AG04450 (cell line): ENCODE measurements at regions of chr3 and their contacts with region 1.

Region 1: DNA sequence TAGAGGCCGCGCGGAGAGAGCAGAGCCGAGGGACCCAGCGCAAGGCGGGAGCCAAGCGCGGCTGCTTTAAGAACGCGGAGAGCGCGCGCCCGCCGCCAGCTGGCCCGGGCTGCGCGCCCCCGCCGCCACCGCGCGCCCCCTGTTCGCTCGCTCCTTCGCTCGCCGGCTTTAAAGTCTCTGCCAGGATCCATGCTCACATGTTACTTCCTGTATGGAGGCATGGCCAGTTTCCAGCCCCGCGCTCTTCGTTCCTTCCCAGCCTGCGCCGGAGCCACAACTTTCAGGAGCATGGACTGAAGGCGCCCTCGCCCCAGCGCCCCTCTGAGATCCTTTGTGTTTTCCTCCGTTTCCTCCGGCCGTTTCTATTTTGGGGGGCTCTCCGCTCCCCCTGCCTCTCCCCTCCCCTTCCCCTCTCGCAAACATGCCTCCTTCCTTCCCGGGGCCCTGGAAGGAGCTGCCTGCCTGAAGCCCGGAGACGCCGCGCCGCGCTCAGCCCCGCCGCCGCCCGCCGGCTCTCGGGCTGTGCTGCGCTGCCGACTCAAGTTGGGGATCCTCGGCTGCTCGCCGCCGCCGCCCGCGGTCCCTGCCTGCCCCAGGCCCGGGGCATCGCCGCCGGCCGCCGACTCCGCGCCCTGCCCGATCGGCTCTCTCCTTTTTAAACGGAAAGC is at the start of gene PTPRG:
- DNase-seq: peak; percentile 83
- H3K4me3 ChIP-seq: peak within 1 kb of the TSS; percentile 86
- H3K27ac ChIP-seq: peak within 1 kb of the TSS; percentile 96
- H3K27me3 ChIP-seq: no peaks in the 10 kb centered on the region
- CTCF ChIP-seq: no peak
- polyA plus RNA-seq, gene PTPRG: 24.2 and 26.5 TPM in 2 replicates

Region 2: GRCh38 chr3:61360297-61360965 is 201.1 kb before region 1 on chr3:
- CTCF ChIA-PET with region 1: no interaction called
- POLR2A ChIA-PET with region 1: no interaction called
- DNase-seq: no peak
- H3K4me3 ChIP-seq: no peak overlapping the region
- H3K27ac ChIP-seq: no peak overlapping the region
- H3K27me3 ChIP-seq: no peaks in the 10 kb centered on the region
- CTCF ChIP-seq: no peak

Region 3: DNA sequence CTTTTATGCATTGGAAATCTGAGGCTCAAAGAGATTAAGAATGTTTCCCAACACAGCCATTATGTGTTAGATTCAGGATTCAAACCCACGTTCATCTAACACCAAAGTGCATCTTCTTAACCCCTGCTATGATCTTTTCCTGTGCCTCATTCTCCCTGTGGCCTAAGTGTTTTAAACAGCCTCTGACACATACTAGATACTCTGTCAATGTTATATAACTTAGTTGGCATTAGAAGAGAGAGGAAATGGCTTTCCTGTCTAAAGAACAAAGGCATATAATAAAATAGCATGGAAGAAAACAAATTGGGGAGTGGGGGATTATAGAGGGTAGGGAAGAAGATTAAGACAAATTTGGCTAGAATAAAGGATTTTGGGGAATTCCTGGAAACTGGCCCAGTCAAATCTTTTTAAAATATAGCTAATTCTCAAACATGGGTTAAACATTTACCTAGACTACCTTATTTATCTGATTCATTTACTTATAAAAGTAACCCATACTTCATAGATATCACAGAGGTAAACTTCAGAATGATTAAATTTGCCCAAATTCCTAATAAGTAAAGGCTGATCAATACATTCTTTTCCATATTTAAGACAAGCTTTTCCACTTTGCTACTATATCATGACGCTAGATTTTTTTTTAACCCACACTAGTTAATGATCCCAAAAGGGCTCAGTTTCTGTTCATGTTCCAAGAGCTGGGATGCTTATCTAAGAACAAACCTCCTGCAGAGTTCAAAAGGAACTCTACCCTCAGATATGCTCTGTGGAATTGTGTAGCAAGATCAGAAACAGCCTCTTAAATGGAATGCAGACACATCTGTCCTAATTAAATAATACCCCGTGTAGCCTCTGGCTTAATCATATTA is 123.0 kb before region 1 on chr3:
- CTCF ChIA-PET with region 1: no interaction called
- POLR2A ChIA-PET with region 1: no interaction called
- DNase-seq: no peak
- H3K4me3 ChIP-seq: no peak overlapping the region
- H3K27ac ChIP-seq: no peak overlapping the region
- H3K27me3 ChIP-seq: no peaks in the 10 kb centered on the region
- CTCF ChIP-seq: no peak

Region 4: DNA sequence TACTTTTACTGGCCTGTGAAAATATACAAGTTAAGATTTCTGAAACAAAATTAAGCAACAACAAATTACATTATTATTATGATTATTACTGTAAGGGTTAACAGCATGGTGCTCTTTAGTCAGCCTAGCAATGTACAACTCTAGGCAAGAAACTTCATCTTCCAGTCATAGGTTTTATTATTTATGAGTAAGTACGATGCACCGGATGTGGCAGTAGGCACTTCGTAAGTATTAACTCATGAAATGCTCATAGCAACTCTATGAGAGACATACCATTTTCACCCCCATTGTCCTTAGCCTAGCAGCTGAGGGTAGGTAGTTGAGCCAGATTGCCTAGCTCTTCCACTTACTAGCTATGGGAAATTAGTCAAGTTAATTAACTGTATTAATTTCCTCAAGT is 68.2 kb before region 1 on chr3:
- CTCF ChIA-PET with region 1: no interaction called
- POLR2A ChIA-PET with region 1: no interaction called
- DNase-seq: no peak
- H3K4me3 ChIP-seq: no peak overlapping the region
- H3K27ac ChIP-seq: no peak overlapping the region
- H3K27me3 ChIP-seq: no peaks in the 10 kb centered on the region
- CTCF ChIP-seq: no peak

Region 5: DNA sequence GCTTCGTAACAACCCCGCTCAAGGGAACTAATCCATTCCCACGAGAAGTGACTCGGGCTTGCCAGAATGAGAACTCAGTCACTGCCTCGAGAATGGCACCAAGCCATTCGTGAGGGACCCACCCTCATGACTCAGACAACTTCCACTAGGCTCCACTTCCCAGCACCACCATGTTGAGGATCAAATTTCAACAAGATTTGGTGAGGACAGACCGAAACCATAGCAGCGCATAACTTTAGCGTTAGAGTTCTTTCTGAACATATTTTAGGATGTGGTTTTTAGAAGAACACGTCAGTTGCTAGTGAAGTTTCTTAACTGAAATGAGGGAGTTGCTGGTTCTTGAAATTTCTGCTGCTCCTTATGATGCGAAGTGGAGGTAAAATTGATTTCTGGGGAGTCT is 13.3 kb after region 1 on chr3:
- CTCF ChIA-PET with region 1: interaction called, 13 read pairs
- POLR2A ChIA-PET with region 1: interaction called, 3 read pairs
- DNase-seq: peak; percentile 91
- H3K4me3 ChIP-seq: peak overlapping the region; percentile 38
- H3K27ac ChIP-seq: peak overlapping the region; percentile 92
- H3K27me3 ChIP-seq: no peaks in the 10 kb centered on the region
- CTCF ChIP-seq: no peak

Region 6: DNA sequence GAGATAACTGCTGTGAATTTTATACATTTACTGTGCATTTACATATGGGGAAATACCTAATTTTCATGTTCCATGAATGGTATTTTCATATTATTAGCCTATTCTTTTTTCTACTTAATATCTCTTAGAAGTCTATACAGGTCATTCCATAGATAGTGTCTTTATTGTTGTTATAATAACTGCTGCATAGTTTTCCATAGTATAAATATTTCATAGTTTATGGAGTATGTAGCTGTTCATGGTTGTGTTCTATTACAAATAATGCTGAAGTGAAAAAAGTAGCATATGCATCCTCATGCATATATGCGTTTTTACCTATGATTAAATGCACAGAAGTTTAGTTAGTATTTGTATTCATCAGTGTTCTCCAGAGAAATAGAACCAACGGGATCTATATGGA is 145.4 kb after region 1 on chr3:
- CTCF ChIA-PET with region 1: no interaction called
- POLR2A ChIA-PET with region 1: no interaction called
- DNase-seq: no peak
- H3K4me3 ChIP-seq: no peak overlapping the region
- H3K27ac ChIP-seq: no peak overlapping the region
- H3K27me3 ChIP-seq: no peaks in the 10 kb centered on the region
- CTCF ChIP-seq: no peak

Region 7: GRCh38 chr3:61894988-61895935 is 333.8 kb after region 1 on chr3:
- CTCF ChIA-PET with region 1: interaction called, 12 read pairs
- POLR2A ChIA-PET with region 1: no interaction called
- DNase-seq: peak; percentile 58
- H3K4me3 ChIP-seq: no peak overlapping the region
- H3K27ac ChIP-seq: no peak overlapping the region
- H3K27me3 ChIP-seq: no peaks in the 10 kb centered on the region
- CTCF ChIP-seq: no peak

Region 8: GRCh38 chr3:62131592-62131991 is 570.1 kb after region 1 on chr3:
- CTCF ChIA-PET with region 1: interaction called, 19 read pairs
- POLR2A ChIA-PET with region 1: no interaction called
- DNase-seq: no peak
- H3K4me3 ChIP-seq: no peak overlapping the region
- H3K27ac ChIP-seq: no peak overlapping the region
- H3K27me3 ChIP-seq: no peaks in the 10 kb centered on the region
- CTCF ChIP-seq: peak; percentile 58

Region 9: DNA sequence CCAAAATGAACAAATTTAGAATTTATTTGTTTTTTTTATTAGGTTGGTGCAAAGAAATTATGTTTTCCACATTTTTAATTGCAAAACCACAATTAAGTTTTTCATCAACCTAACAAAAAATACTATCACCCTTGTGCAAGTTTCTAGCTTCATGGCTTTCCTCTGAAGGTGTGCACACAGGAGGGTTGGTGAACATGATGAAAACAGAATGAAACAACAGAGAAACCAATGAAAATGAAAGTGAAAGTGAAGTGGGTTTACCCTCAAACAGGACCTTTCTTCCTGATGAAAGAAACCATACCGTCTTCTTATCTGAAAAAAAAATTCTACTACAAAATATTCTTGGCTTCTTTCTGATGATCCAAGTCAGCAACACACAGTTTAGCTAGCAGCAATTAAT is 883.8 kb after region 1 on chr3:
- CTCF ChIA-PET with region 1: no interaction called
- POLR2A ChIA-PET with region 1: interaction called, 10 read pairs
- DNase-seq: no peak
- H3K4me3 ChIP-seq: peak overlapping the region; percentile 38
- H3K27ac ChIP-seq: no peak overlapping the region
- H3K27me3 ChIP-seq: peaks cover 2% of the 10 kb centered on the region
- CTCF ChIP-seq: no peak